GM12878 (cell line): ENCODE measurements at regions of chr22 and their contacts with region 1.

Region 1: DNA sequence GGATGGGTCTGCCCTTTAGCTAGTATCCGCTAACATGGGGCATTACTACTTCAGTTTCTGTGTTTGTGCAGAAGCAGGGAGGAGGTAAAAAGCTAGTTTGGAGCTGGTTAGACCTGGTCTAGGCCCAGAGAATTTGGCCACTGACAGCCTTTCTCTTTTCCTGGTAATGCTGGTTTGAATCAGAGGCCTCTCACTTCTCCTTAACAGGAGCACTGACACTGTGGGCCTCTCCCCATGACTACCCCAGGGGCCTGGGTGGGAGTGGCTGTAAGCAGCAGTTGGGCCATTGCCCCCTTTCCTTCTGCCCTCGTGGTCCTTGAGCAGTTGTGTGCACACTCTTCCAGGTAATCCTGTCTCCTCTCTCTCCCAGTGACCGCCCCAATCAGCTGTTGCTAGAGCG is 8.5 kb upstream of the SLC25A18 start:
- DNase-seq: no peak
- ATAC-seq: no peak
- H3K4me3 ChIP-seq: no peak overlapping the region
- H3K27ac ChIP-seq: no peak overlapping the region
- H3K4me1 ChIP-seq: no peaks in the 10 kb centered on the region
- H3K27me3 ChIP-seq: no peaks in the 10 kb centered on the region; a peak in 1 of 4 replicates
- CTCF ChIP-seq: no peak
- EP300 ChIP-seq: no peak
- POLR2A ChIP-seq: no peak
- RAD21 ChIP-seq: no peak

Region 2: GRCh38 chr22:17726464-17727246 is 171.8 kb after region 1 on chr22:
- CTCF ChIA-PET with region 1: interaction called, 7 read pairs
- POLR2A ChIA-PET with region 1: no interaction called
- RAD21 ChIA-PET with region 1: no interaction called
- SMC1A ChIA-PET with region 1: no interaction called
- in situ Hi-C with region 1: no loop called
- intact Hi-C with region 1: loop called (anchors 5 kb)
- DNase-seq: no peak
- ATAC-seq: peak; percentile 42
- H3K4me3 ChIP-seq: no peak overlapping the region
- H3K27ac ChIP-seq: no peak overlapping the region
- H3K4me1 ChIP-seq: no peaks in the 10 kb centered on the region
- H3K27me3 ChIP-seq: no peaks in the 10 kb centered on the region
- CTCF ChIP-seq: no peak
- EP300 ChIP-seq: no peak
- POLR2A ChIP-seq: no peak
- RAD21 ChIP-seq: no peak